Calu3 (cell line): ENCODE measurements at regions of chr4 and their contacts with region 1.

Region 1: DNA sequence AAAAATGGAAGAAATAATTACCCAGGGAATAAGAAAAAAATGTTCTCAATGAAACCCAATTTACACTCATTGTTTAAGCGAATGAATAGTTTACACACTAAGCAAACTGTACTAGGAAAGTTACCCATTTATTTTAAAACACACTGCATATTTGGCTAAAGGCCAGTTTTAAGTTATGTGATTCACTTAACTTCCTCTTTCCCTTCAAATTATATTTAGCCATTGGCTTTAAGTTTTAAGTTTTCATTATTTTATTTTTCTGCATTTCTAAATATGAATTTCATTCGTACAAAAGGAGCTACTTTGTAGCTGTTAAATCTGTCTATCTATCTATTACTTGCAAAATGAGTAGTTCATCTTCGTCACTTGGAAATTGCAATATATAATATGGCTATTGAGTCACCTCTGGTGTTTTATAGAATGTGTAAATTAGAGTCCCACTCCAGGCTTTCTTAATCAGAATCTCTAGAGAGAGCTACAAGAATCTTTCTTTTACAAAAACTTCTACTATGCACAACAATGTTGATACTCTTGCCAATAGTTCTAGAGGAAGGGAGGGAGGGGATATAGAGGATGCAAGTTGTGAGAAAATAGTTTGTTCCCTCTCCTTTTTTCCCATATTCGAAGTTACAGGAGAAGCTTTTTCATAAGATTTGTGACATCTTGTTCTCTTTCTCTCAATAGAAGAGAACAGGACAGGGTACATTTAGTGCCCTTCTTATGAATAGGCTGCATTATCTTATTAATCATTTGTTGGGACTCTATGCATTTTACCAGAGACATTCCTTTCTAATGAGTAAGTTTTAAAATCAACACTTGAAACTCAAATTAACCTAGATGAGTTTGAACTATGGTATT is 41.8 kb downstream of the SULT1B1 start:
- DNase-seq: no peak
- H3K4me3 Mint-ChIP-seq: peak overlapping the region; percentile 12
- H3K27ac Mint-ChIP-seq: peak overlapping the region; percentile 60
- H3K4me1 Mint-ChIP-seq: peaks cover 8% of the 10 kb centered on the region
- H3K27me3 Mint-ChIP-seq: no peaks in the 10 kb centered on the region
- CTCF ChIP-seq: no peak

Region 2: GRCh38 chr4:69503558-69503957 is 215.1 kb before region 1 on chr4:
- CTCF ChIA-PET with region 1: no interaction called
- intact Hi-C with region 1: no loop called
- DNase-seq: no peak
- H3K4me3 Mint-ChIP-seq: no peak overlapping the region
- H3K27ac Mint-ChIP-seq: no peak overlapping the region
- H3K4me1 Mint-ChIP-seq: no peaks in the 10 kb centered on the region
- H3K27me3 Mint-ChIP-seq: no peaks in the 10 kb centered on the region
- CTCF ChIP-seq: no peak

Region 3: DNA sequence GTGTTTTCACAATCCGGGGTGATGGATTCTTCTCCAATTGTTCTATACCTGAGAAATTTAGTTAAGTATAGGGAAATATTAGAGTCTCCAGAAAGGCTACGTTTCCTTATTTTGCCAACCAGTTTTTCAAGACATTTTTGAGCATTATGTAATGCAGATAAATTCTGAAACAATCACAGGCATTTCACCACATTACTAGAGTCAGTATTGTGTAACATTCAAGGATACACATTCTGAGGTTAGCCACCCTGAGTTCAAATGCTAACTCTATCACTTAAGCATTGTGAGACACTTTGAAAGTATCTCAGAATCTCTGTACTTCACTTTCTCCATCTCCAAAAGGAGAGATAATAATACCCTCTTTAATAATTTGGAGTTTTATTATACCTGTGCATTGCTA is 31.1 kb after region 1 on chr4:
- CTCF ChIA-PET with region 1: no interaction called
- intact Hi-C with region 1: loop called (anchors 5 kb)
- DNase-seq: no peak
- H3K4me3 Mint-ChIP-seq: no peak overlapping the region
- H3K27ac Mint-ChIP-seq: no peak overlapping the region
- H3K4me1 Mint-ChIP-seq: peaks cover 39% of the 10 kb centered on the region
- H3K27me3 Mint-ChIP-seq: no peaks in the 10 kb centered on the region
- CTCF ChIP-seq: no peak